BJ (cell line): ENCODE measurements at regions of chr22 and their contacts with region 1.

Region 1: GRCh38 chr22:37905534-37906363 is at the start of gene MICALL1:
- DNase-seq: no peak
- H3K4me3 ChIP-seq: peak within 1 kb of the TSS; percentile 77
- H3K27me3 ChIP-seq: no peaks in the 10 kb centered on the region
- CTCF ChIP-seq: no peak
- polyA plus RNA-seq, gene MICALL1: 16.6 and 26.5 TPM in 2 replicates

Region 2: DNA sequence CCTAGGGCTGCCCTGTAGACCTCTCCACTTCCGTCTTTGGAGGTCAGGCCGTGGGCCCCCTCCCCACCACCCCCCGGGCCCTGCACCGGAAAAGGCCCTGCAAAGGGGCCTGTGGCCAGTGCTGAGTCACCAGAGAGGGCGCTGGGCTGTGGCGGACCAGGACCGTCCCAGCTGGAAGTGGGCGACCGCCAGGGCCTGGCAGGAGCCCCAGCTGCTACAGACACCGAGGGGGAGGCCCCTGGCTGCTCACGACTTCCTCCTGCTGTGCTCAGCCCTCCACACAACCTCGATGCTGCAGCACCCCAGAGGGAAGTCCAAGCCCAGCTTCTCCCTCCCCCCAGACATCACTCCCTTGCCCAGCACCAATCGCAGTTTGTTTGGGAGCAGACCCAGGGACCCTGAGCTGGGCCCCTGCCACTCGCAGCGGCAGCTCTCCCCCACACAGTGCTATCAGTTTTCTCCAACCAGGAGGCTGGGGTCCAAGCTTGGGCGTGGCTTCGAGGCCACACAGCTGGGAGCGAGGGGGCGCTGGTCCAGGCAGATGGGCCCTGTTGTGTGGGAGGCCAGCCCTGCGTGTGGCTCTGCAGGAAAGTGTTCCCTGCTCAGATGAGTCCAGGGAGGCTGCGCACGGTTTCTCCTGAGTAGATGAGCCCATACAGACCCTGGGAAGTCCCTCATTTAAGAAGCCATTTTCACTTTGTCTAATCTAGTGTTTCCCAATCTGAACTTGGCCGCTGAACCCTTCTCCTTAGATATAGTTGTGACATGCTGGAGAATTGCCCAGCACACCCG is 271.9 kb before region 1 on chr22:
- CTCF ChIA-PET with region 1: no interaction called
- POLR2A ChIA-PET with region 1: interaction called, 11 read pairs
- DNase-seq: peak; percentile 33
- H3K4me3 ChIP-seq: no peak overlapping the region
- H3K27me3 ChIP-seq: no peaks in the 10 kb centered on the region
- CTCF ChIP-seq: peak; percentile 48; the same call in 1 of the 2 replicates

Region 3: GRCh38 chr22:37792494-37792893 is 113.3 kb before region 1 on chr22:
- CTCF ChIA-PET with region 1: no interaction called
- POLR2A ChIA-PET with region 1: no interaction called
- DNase-seq: no peak
- H3K4me3 ChIP-seq: no peak overlapping the region
- H3K27me3 ChIP-seq: no peaks in the 10 kb centered on the region
- CTCF ChIP-seq: no peak

Region 4: DNA sequence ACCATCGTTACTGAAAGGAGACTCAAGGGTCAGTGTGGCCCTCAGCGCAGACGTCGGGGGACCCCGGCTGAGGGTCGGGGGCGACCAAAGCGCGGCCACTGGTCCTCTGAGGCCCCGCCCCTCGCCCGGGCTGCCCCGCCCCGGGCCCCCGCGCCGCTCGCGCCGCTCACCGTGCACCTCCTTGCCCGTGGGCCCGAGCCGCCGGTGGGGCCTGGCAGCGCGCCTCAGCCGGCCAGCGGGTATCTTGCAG is 62.1 kb before region 1 on chr22:
- CTCF ChIA-PET with region 1: interaction called, 3 read pairs
- POLR2A ChIA-PET with region 1: interaction called, 32 read pairs
- DNase-seq: no peak
- H3K4me3 ChIP-seq: peak overlapping the region; percentile 68
- H3K27me3 ChIP-seq: no peaks in the 10 kb centered on the region
- CTCF ChIP-seq: no peak

Region 5: DNA sequence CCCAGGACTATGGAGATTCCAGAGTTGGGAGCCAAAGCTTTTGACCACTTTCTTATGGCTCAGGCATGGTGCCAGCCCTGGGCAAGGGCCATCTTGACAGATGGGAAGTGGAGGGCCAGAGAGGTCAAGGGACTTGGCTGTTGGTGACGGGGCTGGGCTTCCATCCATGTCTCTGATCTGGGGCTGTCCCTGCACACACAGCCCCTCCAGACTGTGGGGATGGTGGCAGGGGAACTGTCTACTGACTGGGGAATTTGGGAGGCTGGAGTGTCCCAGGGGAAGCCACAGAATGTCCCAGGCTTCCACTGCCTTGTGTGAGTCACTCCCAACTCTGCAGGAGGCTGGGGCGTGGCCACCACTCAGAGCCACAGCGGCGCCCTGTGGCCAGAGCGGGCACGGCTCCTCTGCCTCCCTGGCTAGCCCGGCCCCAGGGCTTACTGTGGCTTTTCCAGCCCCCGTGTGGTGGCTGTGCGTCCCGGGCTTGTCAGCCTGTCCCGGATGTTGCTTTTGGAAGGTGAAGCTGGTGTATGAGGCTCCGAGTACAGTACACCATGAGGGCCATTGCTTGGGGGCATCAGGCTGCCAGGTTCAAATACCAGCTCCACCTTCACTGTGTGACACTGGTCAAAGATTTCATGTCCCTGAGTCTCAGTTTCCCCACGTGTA is 28.1 kb after region 1 on chr22:
- CTCF ChIA-PET with region 1: interaction called, 30 read pairs
- POLR2A ChIA-PET with region 1: no interaction called
- DNase-seq: peak; percentile 72
- H3K4me3 ChIP-seq: no peak overlapping the region
- H3K27me3 ChIP-seq: no peaks in the 10 kb centered on the region
- CTCF ChIP-seq: peak; percentile 100